Sciatic nerve (tissue), 2 donors: ENCODE measurements at regions of chr12 and their contacts with region 1.

Region 1: DNA sequence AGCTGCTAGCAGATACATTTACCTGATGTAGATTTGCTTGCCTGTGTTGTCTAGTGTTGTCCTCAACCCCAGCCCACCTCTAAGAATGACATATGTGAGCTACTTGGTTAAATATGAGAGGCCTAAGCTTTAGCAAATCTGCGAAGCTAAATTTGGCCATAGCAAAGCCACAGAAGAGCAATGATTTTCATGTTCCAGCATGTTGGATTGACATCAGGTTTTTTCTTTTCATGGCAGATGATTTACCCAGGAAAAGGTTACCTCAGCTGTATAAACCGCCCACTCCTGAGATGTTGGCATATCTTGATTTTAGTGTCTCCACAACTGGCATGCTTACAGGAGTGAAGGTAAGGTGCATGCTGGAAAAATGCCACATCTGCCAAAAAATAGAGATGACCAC is 36.4 kb upstream of the ATF1 start:
- DNase-seq: no peak
- ATAC-seq: no peak

Region 2: GRCh38 chr12:50685641-50686040 is 41.8 kb before region 1 on chr12:
- intact Hi-C with region 1: loop called (anchors 1 kb)
- DNase-seq: no peak
- ATAC-seq: no peak

Region 3: GRCh38 chr12:50708631-50709030 is 18.8 kb before region 1 on chr12:
- intact Hi-C with region 1: no loop called
- DNase-seq: no peak
- ATAC-seq: no peak

Region 4: GRCh38 chr12:50763639-50764285 is 36.3 kb after region 1 on chr12 and contains the start of gene ATF1:
- intact Hi-C with region 1: no loop called
- DNase-seq: peak; percentile 92
- ATAC-seq: peak; percentile 97
- total RNA-seq, gene ATF1: 44.2 TPM